Ascending aorta (tissue), 2 donors: ENCODE measurements at regions of chr22 and their contacts with region 1.

Region 1: DNA sequence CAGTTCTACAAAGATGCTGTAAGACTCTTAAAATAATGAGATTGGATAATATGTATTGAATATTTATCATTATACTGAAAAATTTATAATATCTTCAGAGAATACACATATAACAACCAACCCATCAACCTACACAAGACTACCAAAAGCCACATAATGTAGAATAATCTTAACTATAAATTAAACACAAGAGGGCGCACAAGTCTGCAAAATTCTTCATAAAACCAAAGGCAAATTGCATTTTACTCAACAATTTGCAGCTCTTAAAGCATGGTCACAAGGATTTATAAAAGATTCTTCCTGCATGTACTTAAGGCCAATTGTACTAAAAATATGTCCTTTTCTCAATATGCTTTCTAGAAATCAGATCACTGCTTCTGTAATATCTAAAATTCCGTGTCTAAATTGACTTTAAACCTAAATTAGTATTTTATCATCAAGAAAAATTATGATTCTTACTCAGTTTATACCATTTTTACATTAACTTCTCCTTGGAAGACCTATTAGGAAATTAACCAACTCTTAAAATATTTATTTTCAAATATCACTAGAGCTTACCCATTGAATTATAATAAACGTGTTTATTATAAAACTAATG is 79.0 kb downstream of the TTC28 start:
- DNase-seq: no peak
- H3K4me3 ChIP-seq: no peak overlapping the region
- H3K27ac ChIP-seq: no peak overlapping the region
- H3K4me1 ChIP-seq: no peaks in the 10 kb centered on the region
- H3K27me3 ChIP-seq: no peaks in the 10 kb centered on the region
- CTCF ChIP-seq: peak; percentile 44 to 61 (median 50)

Region 2: GRCh38 chr22:28629420-28630176 is 29.0 kb after region 1 on chr22:
- intact Hi-C with region 1: no loop called
- DNase-seq: no peak
- H3K4me3 ChIP-seq: no peak overlapping the region
- H3K27ac ChIP-seq: no peak overlapping the region
- H3K4me1 ChIP-seq: no peaks in the 10 kb centered on the region
- H3K27me3 ChIP-seq: no peaks in the 10 kb centered on the region
- CTCF ChIP-seq: no peak

Region 3: GRCh38 chr22:28829358-28830181 is 228.9 kb after region 1 on chr22:
- intact Hi-C with region 1: loop called (anchors 1 kb)
- DNase-seq: peak in 1 of 2 donors; percentile 85
- H3K4me3 ChIP-seq: no peak overlapping the region
- H3K27ac ChIP-seq: no peak overlapping the region
- H3K4me1 ChIP-seq: no peaks in the 10 kb centered on the region
- H3K27me3 ChIP-seq: no peaks in the 10 kb centered on the region
- CTCF ChIP-seq: peak; percentile 94 to 96 (median 95)

Region 4: DNA sequence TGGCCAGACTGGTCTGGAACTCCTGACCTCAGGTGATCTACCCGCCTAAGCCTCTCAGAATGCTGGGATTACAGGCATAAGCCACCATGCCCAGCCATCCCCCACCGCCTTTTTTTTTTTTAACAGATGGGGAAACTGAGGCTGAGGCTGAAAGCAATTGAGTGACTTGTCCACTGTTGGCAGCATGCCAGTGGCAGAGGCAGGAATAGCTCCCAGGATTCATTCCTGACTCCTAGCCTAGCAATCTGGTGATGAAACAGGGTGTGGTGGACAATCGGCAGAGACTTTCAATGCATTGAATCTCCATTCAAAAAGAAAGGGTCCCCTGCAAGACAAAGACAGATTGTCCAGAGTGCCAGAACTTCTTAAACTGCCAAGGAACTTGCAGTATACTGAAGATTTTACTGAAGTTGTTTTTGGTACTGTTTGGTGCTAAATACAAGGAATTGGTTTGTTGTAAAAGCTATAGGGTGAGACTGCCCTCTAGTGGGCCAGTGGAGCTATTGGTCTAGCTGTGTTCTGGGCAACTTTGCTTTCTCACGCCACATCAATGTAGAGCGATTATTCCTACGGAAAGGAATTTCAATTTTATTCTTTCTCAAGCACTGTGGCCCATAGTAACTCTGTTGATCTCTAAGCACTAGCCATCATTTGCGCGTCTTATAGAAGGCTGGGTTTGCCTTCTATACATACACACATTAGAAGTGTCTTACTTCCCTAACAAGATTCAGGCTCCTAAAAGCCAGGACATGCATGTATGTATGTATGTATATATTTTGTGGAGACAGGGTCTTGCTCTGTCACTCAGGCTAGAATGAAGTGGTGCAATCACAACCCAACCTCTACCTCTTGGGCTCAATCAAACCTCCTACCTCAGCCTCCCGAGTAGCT is 440.0 kb after region 1 on chr22:
- intact Hi-C with region 1: loop called (anchors 5 kb)
- DNase-seq: peak in 1 of 2 donors; percentile 85
- H3K4me3 ChIP-seq: no peak overlapping the region
- H3K27ac ChIP-seq: peak overlapping the region in 1 of 2 donors; percentile 35
- H3K4me1 ChIP-seq: peaks cover 0 to 19% of the 10 kb centered on the region in 2 donors
- H3K27me3 ChIP-seq: no peaks in the 10 kb centered on the region
- CTCF ChIP-seq: peak; percentile 94 to 97 (median 96)

Region 5: DNA sequence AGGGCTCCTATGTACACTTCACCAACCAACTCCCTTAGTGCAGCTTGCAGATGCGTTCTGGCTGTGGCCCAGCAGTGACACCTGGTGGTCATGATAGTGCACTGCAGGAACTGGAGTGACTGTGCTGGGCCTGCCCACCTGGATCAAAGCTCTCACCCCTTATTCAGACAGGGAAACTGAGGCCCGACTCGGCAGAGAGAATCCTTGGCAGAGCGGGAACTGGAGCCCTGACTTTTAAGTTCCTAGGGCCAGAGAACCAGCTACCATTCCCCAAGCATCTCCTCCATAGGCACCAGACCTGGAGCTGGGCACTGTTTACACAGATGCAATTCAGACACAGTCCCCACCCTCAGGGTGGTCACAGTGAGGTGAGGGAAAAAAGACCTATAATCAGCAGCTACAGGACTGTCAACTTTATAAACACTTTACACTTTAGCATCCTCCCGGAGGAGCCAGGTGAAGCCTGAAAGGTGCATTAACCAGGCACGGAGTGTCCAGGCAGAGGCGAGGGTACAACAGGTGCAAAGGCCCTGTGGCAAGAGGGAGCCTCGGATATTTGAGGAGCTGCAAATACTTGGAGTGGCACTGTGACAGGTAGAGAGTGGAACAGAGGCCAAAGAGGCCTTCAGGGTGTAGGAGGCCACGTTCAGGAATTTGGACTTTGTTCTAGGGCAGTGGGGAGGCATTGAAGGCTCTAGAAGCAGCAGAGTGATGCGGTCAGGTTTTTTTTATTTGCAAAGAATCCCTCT is 645.2 kb after region 1 on chr22:
- intact Hi-C with region 1: loop called (anchors 2 kb)
- DNase-seq: peak in 1 of 2 donors; percentile 76
- H3K4me3 ChIP-seq: no peak overlapping the region
- H3K27ac ChIP-seq: no peak overlapping the region
- H3K4me1 ChIP-seq: no peaks in the 10 kb centered on the region
- H3K27me3 ChIP-seq: no peaks in the 10 kb centered on the region
- CTCF ChIP-seq: peak; percentile 90 to 98 (median 97)